Common myeloid progenitor, CD34-positive (primary cell): ENCODE measurements at regions of chr5 and their contacts with region 1.

Region 1: GRCh38 chr5:77143998-77144836 is 57.1 kb upstream of the ZBED3 start:
- DNase-seq: peak; percentile 73 to 84 (median 81)
- H3K4me3 ChIP-seq: no peak overlapping the region
- H3K27ac ChIP-seq: no peak overlapping the region
- H3K4me1 ChIP-seq: peaks cover 0 to 7% (median 3%) of the 10 kb centered on the region in 4 experiments
- H3K27me3 ChIP-seq: no peaks in the 10 kb centered on the region

Region 2: GRCh38 chr5:77232574-77233358 is 88.5 kb after region 1 on chr5:
- CTCF ChIA-PET with region 1: interaction called, 10 read pairs
- POLR2A ChIA-PET with region 1: no interaction called
- DNase-seq: peak in 2 of 3 donors; percentile 88 to 89
- H3K4me3 ChIP-seq: no peak overlapping the region
- H3K27ac ChIP-seq: no peak overlapping the region
- H3K4me1 ChIP-seq: peaks cover 11 to 26% (median 18%) of the 10 kb centered on the region in 4 experiments
- H3K27me3 ChIP-seq: no peaks in the 10 kb centered on the region

Region 3: DNA sequence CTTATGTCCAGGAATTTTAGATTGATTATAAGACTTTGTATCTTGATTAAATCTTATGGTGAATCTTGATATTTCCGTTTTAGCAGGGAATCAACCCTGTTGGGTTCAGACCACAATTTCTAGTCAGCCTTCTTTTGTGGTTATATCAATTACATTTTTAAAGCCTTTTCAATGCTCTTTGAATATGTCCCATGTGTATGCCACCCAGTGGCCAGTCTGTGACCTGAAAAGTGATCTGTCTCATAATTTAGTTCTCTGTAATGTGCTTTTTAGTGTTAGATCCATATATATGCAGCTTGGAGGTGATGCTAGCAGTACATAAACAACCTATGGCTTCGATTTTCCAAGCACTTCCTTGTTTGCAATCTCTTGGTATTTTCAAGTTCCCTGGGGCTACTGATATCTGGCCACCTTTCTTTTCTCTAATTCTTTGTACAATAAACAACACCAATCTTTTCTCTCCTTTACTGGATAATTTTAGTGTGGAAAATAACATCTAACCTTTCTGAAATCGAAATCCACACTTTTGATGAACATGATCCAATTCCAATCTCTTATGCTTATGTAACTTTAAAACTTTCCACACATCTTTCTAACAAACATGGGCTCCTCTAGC is 95.0 kb after region 1 on chr5:
- CTCF ChIA-PET with region 1: interaction called, 18 read pairs
- POLR2A ChIA-PET with region 1: no interaction called
- DNase-seq: peak; percentile 38 to 65 (median 64)
- H3K4me3 ChIP-seq: no peak overlapping the region
- H3K27ac ChIP-seq: no peak overlapping the region
- H3K4me1 ChIP-seq: no peaks in the 10 kb centered on the region
- H3K27me3 ChIP-seq: no peaks in the 10 kb centered on the region